ENCODE measurements at regions of chr17 and their contacts with region 1.

Region 1: DNA sequence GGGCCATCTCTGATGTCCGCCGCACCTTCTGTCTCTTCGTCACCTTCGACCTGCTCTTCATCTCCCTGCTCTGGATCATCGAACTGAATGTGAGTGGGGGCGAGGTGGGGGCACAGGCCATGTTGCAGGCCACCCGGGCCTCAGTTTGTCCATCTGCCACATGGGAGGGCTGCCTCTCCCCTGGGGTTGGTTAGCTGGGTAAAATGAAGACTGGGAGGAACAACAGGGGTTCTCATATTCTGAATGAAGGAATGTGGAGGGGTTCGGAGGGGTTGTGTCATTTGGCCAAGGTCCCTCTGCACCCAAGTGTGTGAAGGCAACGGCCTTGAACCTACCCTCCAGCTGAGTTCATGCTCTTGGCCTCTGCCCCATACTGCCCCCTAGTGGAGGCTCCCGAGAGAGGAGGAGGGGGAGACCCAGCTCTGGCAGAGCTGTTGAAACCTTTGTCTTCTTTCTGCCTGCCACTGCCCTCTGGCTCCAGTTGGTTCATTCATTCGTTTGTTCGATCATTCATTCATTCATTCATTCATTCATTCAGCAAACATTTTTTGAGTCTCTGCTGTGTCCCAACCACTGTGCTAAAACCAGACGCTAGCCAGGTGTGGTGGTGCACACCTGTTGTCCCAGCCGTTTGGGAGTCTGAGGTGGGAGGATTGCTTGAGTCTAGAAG is 11.4 kb upstream of the TCAP start:
- DNase-seq: peak; percentile 89
- ATAC-seq: peak; percentile 91
- H3K4me3 Mint-ChIP-seq: no peak overlapping the region
- H3K27ac Mint-ChIP-seq: no peak overlapping the region
- H3K4me1 Mint-ChIP-seq: peaks cover 48% of the 10 kb centered on the region
- H3K27me3 Mint-ChIP-seq: no peaks in the 10 kb centered on the region
- CTCF ChIP-seq: peak; percentile 96

Region 2: DNA sequence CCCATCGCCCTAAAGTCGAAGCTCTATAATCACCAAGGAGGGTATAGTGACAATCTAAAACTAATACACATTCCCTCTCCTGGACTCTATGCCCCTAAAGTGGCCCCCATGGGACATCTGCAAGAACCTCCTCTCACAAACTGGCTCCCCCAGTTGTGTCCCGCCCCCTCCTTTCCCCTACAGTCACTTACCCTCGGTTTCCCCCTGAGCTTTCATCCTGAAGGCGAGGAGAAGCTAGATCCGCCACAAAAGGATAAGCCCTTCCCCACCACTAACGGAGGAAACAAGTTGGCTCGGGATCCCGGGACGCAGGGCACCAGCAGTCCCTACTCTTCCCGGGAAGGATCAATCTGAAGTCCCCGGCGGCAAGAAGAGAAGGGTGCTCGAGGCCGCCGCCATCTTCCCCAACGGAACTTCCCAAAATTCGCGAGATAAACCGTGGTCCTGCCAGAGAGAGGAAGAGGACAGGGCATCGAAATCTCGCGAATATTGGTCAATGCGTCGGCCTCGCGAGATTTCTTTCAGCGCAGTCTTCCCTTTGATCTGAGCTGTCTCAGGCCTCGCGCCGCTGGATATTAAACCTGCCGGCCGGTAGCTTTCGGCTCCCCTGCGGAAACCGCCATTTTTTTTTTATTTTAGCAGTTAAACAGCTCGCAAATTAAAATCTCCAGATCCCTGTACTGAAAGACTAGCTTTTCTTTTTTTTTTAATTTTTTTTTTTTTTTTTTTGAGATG is 202.8 kb before region 1 on chr17 and contains the start of gene MED1:
- CTCF ChIA-PET with region 1: no interaction called
- POLR2A ChIA-PET with region 1: no interaction called
- intact Hi-C with region 1: no loop called
- DNase-seq: peak; percentile 97
- ATAC-seq: peak; percentile 98
- H3K4me3 Mint-ChIP-seq: peak within 1 kb of the TSS; percentile 92
- H3K27ac Mint-ChIP-seq: peak within 1 kb of the TSS; percentile 96
- H3K4me1 Mint-ChIP-seq: peaks cover 25% of the 10 kb centered on the region
- H3K27me3 Mint-ChIP-seq: no peaks in the 10 kb centered on the region
- CTCF ChIP-seq: no peak
- total RNA-seq, gene MED1: 60.7 to 64.7 TPM

Region 3: DNA sequence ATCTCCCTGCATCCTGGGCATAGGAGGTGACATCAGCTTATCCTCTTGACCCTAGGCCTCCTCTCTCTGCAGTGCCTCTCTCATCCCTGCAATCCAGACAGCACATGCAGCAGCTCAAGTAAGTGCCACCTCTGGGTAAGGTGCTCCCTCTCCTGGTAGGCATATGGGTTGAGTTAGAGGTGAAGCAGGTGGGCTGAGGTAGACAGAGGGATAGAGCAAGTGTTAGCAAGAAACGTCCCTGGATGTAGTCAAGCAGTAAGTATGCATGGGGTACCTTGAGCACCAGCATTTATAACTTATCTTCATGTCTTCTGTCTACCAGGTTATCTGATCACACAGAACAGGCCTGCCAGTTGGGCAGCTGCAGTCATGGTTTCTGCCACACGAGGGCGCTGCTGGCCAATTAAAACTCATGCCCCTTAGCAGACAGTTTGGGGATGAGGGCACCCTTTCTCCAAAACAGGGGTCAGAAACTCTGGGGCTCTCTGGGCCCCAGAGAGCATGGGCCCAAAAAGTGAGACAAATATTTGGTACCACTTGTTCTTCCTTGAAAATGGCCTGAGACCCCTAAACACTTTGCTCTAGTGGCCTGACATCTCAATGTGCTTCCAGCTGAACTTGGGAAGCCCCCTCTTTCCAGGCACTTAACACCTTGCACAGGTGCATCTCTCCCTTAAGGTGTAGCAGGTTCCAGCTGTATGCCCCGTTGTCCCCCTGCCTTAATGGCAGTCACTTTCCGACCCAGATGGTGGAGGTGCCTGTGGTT is 105.9 kb before region 1 on chr17:
- CTCF ChIA-PET with region 1: interaction called, 11 read pairs
- POLR2A ChIA-PET with region 1: no interaction called
- intact Hi-C with region 1: no loop called
- DNase-seq: peak; percentile 87
- ATAC-seq: peak; percentile 87
- H3K4me3 Mint-ChIP-seq: no peak overlapping the region
- H3K27ac Mint-ChIP-seq: no peak overlapping the region
- H3K4me1 Mint-ChIP-seq: no peaks in the 10 kb centered on the region
- H3K27me3 Mint-ChIP-seq: no peaks in the 10 kb centered on the region
- CTCF ChIP-seq: peak; percentile 98

Region 4: GRCh38 chr17:39636927-39637736 is 16.7 kb before region 1 on chr17 and contains the start of gene STARD3:
- CTCF ChIA-PET with region 1: interaction called, 58 read pairs
- POLR2A ChIA-PET with region 1: interaction called, 4 read pairs
- intact Hi-C with region 1: no loop called
- DNase-seq: peak; percentile 95
- ATAC-seq: peak; percentile 93
- H3K4me3 Mint-ChIP-seq: peak within 1 kb of the TSS; percentile 90
- H3K27ac Mint-ChIP-seq: peak within 1 kb of the TSS; percentile 87
- H3K4me1 Mint-ChIP-seq: peaks cover 46% of the 10 kb centered on the region
- H3K27me3 Mint-ChIP-seq: no peaks in the 10 kb centered on the region
- CTCF ChIP-seq: no peak
- total RNA-seq, gene STARD3: 48.7 to 50.3 TPM

Region 5: DNA sequence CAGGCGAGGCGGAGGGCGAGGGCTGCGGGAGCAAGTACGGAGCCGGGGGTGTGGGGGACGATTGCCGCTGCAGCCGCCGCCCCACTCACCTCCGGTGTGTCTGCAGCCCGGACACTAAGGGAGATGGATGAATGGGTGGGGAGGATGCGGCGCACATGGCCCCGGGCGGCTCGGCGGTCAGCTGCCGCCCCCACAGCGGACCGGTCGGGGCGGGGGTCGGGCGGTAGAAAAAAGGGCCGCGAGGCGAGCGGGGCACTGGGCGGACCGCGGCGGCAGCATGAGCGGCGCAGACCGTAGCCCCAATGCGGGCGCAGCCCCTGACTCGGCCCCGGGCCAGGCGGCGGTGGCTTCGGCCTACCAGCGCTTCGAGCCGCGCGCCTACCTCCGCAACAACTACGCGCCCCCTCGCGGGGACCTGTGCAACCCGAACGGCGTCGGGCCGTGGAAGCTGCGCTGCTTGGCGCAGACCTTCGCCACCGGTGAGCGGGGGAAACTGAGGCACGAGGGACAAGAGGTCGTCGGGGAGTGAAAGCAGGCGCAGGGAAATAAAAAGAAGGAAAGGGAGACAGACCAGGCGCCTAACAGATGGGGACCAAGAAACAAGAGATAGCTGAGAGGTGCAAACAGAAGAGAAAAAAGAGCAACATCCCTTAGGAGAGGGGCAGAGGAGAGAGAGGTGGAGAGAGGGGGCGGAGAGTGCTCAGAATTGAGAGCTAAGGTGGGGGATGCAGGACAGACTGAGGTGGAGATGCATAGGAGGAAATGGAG is 14.6 kb after region 1 on chr17 and contains the start of gene PNMT:
- CTCF ChIA-PET with region 1: interaction called, 146 read pairs
- POLR2A ChIA-PET with region 1: interaction called, 6 read pairs
- intact Hi-C with region 1: no loop called
- DNase-seq: peak; percentile 82
- ATAC-seq: peak; percentile 83
- H3K4me3 Mint-ChIP-seq: peak within 1 kb of the TSS; percentile 60
- H3K27ac Mint-ChIP-seq: no peak within 1 kb of the TSS
- H3K4me1 Mint-ChIP-seq: peaks cover 10% of the 10 kb centered on the region
- H3K27me3 Mint-ChIP-seq: peaks cover 15% of the 10 kb centered on the region
- CTCF ChIP-seq: peak; percentile 76
- total RNA-seq, gene PNMT: 0.40 TPM in 1 of 2 experiments, not detected in the other

Region 6: GRCh38 chr17:39695089-39695474 is 41.3 kb after region 1 on chr17:
- CTCF ChIA-PET with region 1: interaction called, 13 read pairs
- POLR2A ChIA-PET with region 1: no interaction called
- intact Hi-C with region 1: no loop called
- DNase-seq: no peak
- ATAC-seq: no peak
- H3K4me3 Mint-ChIP-seq: no peak overlapping the region
- H3K27ac Mint-ChIP-seq: no peak overlapping the region
- H3K4me1 Mint-ChIP-seq: peaks cover 4% of the 10 kb centered on the region
- H3K27me3 Mint-ChIP-seq: peaks cover 14% of the 10 kb centered on the region
- CTCF ChIP-seq: no peak